Gastrocnemius medialis (tissue), 4 donors: ENCODE measurements at regions of chr17 and their contacts with region 1.

Region 1: DNA sequence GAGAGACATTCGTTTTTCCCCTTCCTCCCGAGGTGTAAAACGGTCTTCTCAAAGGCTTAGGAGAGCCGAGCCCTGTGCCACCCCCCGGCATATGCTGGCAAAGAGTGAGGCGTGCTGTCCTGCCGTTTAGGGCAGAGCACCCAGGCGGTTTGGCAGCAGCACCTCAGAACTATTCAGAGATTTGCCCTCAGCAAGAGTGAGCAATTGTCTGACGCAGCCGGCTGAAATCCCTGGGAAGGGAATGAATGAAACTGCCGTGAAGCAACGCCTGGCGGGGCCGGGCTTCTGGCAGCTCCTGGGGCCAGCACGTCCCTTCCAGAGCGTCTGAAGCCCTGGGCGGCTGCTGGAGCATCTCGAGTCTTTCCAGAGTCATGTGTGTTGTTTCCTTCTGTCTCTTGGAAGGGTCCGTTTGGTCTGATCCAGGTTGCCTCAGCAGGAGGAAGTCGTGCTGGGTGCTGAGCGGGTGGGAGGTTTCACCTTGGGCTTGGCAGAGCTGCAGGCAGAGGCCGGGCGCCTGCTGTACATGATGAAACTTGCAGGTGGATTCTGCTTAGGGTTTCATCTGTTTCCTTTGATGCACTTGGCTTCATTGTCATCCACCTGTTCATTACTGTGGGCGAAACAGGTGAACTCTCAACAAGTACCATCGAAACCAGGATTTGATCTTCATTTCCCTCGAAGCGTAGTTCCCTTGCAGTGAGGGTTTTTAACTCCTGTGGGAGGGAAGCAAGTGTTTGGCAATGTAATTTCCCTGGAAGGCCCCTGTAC is 35.4 kb downstream of the TBCD start:
- DNase-seq: peak; percentile 92 to 97
- ATAC-seq: peak; percentile 89 to 90
- H3K4me3 ChIP-seq: no peak overlapping the region
- H3K27ac ChIP-seq: peak overlapping the region; percentile 82 to 90 (median 85)
- H3K4me1 ChIP-seq: peaks cover 28 to 32% of the 10 kb centered on the region in 2 donors
- H3K27me3 ChIP-seq: no peaks in the 10 kb centered on the region
- CTCF ChIP-seq: no peak
- POLR2A ChIP-seq: peak; percentile 71

Region 2: DNA sequence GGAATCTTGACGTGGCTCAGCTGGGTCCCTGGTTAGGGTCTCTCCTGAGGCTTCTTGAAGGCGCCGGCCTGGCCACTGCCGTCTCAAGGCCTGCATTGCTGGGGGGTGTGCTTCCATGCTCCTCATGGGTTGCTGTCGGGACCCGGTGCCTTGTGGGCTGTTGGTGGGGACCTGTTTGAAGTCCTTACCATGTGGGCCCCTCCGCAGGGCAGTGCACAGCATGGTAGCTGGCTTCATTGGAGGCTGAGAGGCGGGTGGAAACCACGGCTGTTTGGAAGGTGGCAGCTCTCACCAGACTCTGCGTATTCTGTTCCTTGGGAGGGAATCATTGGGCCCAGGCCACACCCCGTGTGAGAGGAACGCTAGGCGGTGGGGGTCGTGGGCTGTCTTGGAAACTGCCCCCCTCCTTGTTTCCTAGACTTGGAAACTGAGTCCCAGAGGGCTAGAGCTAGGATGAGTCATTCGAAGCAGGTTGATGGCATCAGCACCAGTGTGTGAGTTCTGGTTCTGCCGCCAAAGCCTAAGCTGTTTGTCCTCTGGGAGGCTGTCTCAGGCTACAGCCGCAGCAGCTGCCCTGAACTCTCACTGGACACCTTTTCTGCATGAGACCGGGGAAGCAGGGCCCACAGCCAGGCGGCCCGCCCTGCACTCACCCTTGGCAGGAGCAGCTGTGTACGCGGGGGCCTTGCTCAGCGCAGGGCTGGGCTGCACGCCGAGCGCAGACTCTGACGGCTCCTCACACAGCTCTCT is 17.4 kb after region 1 on chr17:
- in situ Hi-C with region 1: no loop called
- intact Hi-C with region 1: loop called (anchors 1 kb)
- DNase-seq: peak; percentile 92 to 98
- ATAC-seq: peak; percentile 97 to 98
- H3K4me3 ChIP-seq: peak overlapping the region in 2 of 4 donors; percentile 3 to 14
- H3K27ac ChIP-seq: peak overlapping the region; percentile 83 to 92 (median 88)
- H3K4me1 ChIP-seq: peaks cover 16 to 22% of the 10 kb centered on the region in 2 donors
- H3K27me3 ChIP-seq: no peaks in the 10 kb centered on the region
- CTCF ChIP-seq: peak in 1 of 5 experiments; percentile 13
- POLR2A ChIP-seq: peak in 1 of 2 donors; percentile 24

Region 3: DNA sequence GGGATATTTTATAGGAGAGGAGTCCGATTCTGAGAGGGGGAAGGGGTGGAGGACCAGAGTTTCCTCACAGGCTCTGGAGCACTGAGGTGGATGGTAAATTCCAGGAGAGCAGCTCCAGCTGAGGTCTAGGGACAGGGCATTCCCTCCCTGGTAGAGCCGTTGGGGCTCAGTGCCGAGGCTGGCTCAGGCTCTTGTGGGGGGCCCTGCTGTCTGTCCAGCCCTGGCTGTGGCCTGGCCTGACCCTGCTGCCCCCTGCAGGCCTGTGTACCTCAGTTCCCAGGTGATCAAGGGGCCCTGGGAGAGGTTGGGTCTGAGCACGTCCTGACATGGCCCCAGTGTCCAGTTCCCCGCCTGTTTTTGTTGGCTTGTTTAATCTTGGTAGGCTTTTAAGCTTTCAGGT is 35.7 kb after region 1 on chr17:
- in situ Hi-C with region 1: no loop called
- intact Hi-C with region 1: no loop called
- DNase-seq: no peak
- ATAC-seq: no peak
- H3K4me3 ChIP-seq: no peak overlapping the region
- H3K27ac ChIP-seq: no peak overlapping the region
- H3K4me1 ChIP-seq: no peaks in the 10 kb centered on the region
- H3K27me3 ChIP-seq: no peaks in the 10 kb centered on the region
- CTCF ChIP-seq: peak in 2 of 5 experiments; percentile 8 to 24
- POLR2A ChIP-seq: no peak

Region 4: DNA sequence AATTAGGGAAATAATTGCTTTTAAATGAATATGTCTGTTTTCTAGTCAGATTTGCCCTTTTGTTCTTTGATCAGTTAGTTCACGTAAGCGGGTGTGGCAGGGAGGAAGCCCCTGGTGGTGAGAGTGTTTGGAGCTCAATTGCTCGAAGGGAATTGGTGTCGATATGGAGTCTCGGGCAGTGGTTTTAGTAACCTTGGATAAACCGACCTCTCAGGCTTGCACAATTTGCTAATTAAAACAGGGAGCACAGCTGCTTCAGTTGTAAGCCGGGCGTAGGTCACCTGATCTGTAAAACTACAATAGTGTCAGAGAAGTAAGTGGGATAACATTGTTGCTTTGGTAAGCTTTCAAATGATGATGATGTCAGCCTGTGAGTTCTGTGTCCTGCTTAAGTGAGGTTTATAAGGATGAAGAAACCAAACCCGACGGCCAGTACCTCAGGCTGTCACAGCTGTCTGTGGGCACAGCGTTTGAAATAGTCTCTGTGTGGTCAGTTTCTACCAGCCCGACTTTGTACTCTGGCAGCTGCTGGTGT is 49.6 kb after region 1 on chr17:
- in situ Hi-C with region 1: no loop called
- intact Hi-C with region 1: loop called (anchors 1 kb)
- DNase-seq: peak; percentile 32 to 66
- ATAC-seq: peak; percentile 61 to 68
- H3K4me3 ChIP-seq: no peak overlapping the region
- H3K27ac ChIP-seq: peak overlapping the region; percentile 64 to 88 (median 84)
- H3K4me1 ChIP-seq: peaks cover 22 to 33% of the 10 kb centered on the region in 2 donors
- H3K27me3 ChIP-seq: no peaks in the 10 kb centered on the region
- CTCF ChIP-seq: peak in 4 of 5 experiments; percentile 15 to 37 (median 32)
- POLR2A ChIP-seq: peak in 1 of 2 donors; percentile 53